ENCODE measurements at regions of chr21 and their contacts with region 1.

Region 1: GRCh38 chr21:44994695-44995342 is 55.0 kb downstream of the SLX9 start:
- DNase-seq: no peak
- ATAC-seq: no peak
- H3K4me3 ChIP-seq: no peak overlapping the region
- H3K27ac ChIP-seq: no peak overlapping the region
- H3K4me1 ChIP-seq: no peaks in the 10 kb centered on the region
- H3K27me3 ChIP-seq: peaks cover 3 to 4% of the 10 kb centered on the region in 2 experiments; a peak in 3 of 4 replicates
- CTCF ChIP-seq: no peak
- EP300 ChIP-seq: no peak
- POLR2A ChIP-seq: no peak
- RAD21 ChIP-seq: no peak

Region 2: GRCh38 chr21:44681861-44682579 is 312.8 kb before region 1 on chr21 and contains the start of gene KRTAP12-1:
- CTCF ChIA-PET with region 1: no interaction called
- POLR2A ChIA-PET with region 1: no interaction called
- RAD21 ChIA-PET with region 1: no interaction called
- SMC1A ChIA-PET with region 1: no interaction called
- in situ Hi-C with region 1: no loop called
- intact Hi-C with region 1: no loop called
- DNase-seq: no peak
- ATAC-seq: no peak
- H3K4me3 ChIP-seq: no peak within 1 kb of the TSS
- H3K27ac ChIP-seq: no peak within 1 kb of the TSS
- H3K4me1 ChIP-seq: no peaks in the 10 kb centered on the region; the same call in 1 of the 2 replicates
- H3K27me3 ChIP-seq: peaks cover 0 to 1% of the 10 kb centered on the region in 2 experiments; a peak in 2 of 4 replicates
- CTCF ChIP-seq: no peak
- EP300 ChIP-seq: no peak
- POLR2A ChIP-seq: no peak
- RAD21 ChIP-seq: no peak
- polyA plus RNA-seq, gene KRTAP12-1: not detected

Region 3: DNA sequence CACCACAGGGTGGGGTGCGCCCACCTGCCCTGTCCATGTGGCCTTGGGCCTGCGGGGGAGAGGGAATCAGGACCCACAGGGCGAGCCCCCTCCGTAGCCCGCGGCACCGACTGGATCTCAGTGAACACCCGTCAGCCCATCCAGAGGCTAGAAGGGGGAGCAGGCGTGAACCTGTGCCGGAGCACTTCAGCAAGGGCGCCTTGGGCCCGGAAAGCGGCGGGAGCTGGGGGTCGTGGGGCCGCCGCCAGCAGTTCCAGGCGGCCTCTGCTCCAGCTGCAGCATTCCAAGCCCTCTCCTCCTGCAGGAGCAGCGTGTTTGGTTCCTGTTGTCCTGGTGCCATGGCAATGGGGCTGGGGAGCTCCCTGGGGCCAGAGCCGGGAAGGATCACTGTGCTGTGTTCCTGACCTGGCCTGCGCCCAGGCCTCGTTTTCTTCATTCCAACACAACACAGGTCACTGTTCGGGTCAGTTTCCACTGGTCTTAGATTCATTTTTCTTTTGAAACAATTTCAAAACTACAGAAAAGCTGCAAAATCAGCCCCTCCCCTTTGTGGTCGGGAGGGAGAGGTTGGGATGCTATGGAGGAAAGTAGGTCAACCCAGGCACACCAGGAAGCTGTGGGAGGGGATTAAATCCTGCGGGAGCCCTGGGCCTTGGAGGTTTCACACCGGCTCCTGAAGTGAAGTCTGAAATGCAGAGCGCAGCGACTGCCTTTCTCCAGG is 36.2 kb before region 1 on chr21:
- CTCF ChIA-PET with region 1: no interaction called
- POLR2A ChIA-PET with region 1: no interaction called
- RAD21 ChIA-PET with region 1: no interaction called
- SMC1A ChIA-PET with region 1: no interaction called
- in situ Hi-C with region 1: loop called (anchors 5 kb)
- intact Hi-C with region 1: no loop called
- DNase-seq: no peak
- ATAC-seq: no peak
- H3K4me3 ChIP-seq: no peak overlapping the region
- H3K27ac ChIP-seq: no peak overlapping the region
- H3K4me1 ChIP-seq: no peaks in the 10 kb centered on the region
- H3K27me3 ChIP-seq: no peaks in the 10 kb centered on the region
- CTCF ChIP-seq: no peak
- EP300 ChIP-seq: no peak
- POLR2A ChIP-seq: no peak
- RAD21 ChIP-seq: no peak

Region 4: GRCh38 chr21:44969931-44970755 is 24.7 kb before region 1 on chr21:
- CTCF ChIA-PET with region 1: no interaction called
- POLR2A ChIA-PET with region 1: no interaction called
- RAD21 ChIA-PET with region 1: no interaction called
- SMC1A ChIA-PET with region 1: no interaction called
- in situ Hi-C with region 1: no loop called
- intact Hi-C with region 1: no loop called
- DNase-seq: no peak
- ATAC-seq: no peak
- H3K4me3 ChIP-seq: no peak overlapping the region
- H3K27ac ChIP-seq: no peak overlapping the region
- H3K4me1 ChIP-seq: peaks cover 4% of the 10 kb centered on the region
- H3K27me3 ChIP-seq: no peaks in the 10 kb centered on the region
- CTCF ChIP-seq: no peak
- EP300 ChIP-seq: no peak
- POLR2A ChIP-seq: no peak
- RAD21 ChIP-seq: no peak

Region 5: DNA sequence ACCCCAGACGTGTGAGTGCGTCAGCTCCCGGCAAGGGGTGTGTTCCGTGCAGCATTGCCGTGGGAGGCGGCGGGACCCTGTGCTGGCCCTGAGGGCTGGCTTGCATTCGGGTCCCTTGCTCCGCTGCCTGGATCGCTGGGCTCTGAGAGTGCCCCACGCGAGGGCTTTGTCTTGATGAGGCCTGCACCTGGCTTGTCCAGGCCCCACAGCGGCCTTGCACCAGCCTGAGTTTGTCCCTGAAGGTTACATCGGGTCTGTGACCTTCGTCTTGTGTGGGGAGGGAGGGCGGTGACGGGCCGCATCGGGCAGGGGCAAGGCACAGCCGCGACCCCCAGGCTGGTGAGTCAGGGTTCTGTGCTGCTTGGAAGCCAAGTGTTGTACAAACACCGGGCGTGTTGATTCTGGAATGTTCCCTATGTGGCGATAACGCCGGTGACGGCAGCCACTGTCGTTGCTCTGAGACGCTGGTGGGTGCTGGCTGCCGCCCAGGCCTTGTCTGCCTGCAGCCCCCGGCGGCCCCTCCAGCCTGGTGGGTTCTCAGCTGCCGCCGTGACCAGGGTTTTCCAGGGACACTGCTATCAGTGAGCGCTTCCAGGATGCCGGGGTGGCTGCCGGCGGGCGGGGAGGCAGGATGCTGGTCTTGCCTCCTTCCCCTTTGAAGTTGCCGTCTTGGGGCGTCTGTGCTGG is 12.1 kb before region 1 on chr21:
- CTCF ChIA-PET with region 1: no interaction called
- POLR2A ChIA-PET with region 1: no interaction called
- RAD21 ChIA-PET with region 1: no interaction called
- SMC1A ChIA-PET with region 1: no interaction called
- in situ Hi-C with region 1: no loop called
- intact Hi-C with region 1: no loop called
- DNase-seq: no peak
- ATAC-seq: no peak
- H3K4me3 ChIP-seq: no peak overlapping the region
- H3K27ac ChIP-seq: no peak overlapping the region
- H3K4me1 ChIP-seq: no peaks in the 10 kb centered on the region
- H3K27me3 ChIP-seq: no peaks in the 10 kb centered on the region
- CTCF ChIP-seq: no peak
- EP300 ChIP-seq: no peak
- POLR2A ChIP-seq: no peak
- RAD21 ChIP-seq: no peak

Measured in GM12878 (cell line).